Heart left ventricle (tissue), 16 donors: ENCODE measurements at regions of chr6 and their contacts with region 1.

Region 1: DNA sequence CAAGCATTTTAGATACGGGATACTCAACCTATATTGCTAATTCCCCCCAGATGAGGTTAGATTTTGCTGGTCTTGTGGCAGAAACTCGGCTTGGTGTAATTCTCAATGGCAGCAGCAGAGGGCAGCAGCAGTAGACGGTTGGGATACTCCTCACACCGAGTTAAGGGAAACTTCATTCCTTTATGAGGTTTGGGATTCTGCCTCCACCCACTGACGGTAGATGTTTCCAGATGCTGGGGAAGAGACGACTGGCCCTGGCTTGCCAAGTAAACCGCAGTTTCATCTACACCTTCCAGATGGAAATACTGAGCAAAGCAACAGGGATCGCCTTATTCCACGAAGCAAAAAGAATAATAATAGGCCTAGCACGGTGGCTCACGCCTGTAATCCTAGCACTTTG is 8.2 kb upstream of the TBC1D7 start:
- DNase-seq: peak; percentile 65 to 87 (median 74)
- ATAC-seq: peak; percentile 44 to 80 (median 75)
- H3K4me3 ChIP-seq: no peak overlapping the region
- H3K27ac ChIP-seq: peak overlapping the region in 1 of 12 donors; percentile 33
- H3K4me1 ChIP-seq: peaks cover 0 to 18% (median under 1%) of the 10 kb centered on the region in 12 donors
- H3K27me3 ChIP-seq: no peaks in the 10 kb centered on the region
- CTCF ChIP-seq: peak; percentile 78 to 96 (median 90)
- POLR2A ChIP-seq: no peak

Region 2: GRCh38 chr6:13355043-13355951 is 18.7 kb after region 1 on chr6:
- intact Hi-C with region 1: no loop called
- DNase-seq: no peak
- ATAC-seq: peak in 3 of 4 donors; percentile 39 to 68 (median 39)
- H3K4me3 ChIP-seq: peak overlapping the region in 1 of 12 donors; percentile 2
- H3K27ac ChIP-seq: peak overlapping the region; percentile 1 to 77 (median 42)
- H3K4me1 ChIP-seq: peaks cover 11 to 57% (median 37%) of the 10 kb centered on the region in 12 donors
- H3K27me3 ChIP-seq: no peaks in the 10 kb centered on the region
- CTCF ChIP-seq: no peak
- POLR2A ChIP-seq: no peak

Region 3: DNA sequence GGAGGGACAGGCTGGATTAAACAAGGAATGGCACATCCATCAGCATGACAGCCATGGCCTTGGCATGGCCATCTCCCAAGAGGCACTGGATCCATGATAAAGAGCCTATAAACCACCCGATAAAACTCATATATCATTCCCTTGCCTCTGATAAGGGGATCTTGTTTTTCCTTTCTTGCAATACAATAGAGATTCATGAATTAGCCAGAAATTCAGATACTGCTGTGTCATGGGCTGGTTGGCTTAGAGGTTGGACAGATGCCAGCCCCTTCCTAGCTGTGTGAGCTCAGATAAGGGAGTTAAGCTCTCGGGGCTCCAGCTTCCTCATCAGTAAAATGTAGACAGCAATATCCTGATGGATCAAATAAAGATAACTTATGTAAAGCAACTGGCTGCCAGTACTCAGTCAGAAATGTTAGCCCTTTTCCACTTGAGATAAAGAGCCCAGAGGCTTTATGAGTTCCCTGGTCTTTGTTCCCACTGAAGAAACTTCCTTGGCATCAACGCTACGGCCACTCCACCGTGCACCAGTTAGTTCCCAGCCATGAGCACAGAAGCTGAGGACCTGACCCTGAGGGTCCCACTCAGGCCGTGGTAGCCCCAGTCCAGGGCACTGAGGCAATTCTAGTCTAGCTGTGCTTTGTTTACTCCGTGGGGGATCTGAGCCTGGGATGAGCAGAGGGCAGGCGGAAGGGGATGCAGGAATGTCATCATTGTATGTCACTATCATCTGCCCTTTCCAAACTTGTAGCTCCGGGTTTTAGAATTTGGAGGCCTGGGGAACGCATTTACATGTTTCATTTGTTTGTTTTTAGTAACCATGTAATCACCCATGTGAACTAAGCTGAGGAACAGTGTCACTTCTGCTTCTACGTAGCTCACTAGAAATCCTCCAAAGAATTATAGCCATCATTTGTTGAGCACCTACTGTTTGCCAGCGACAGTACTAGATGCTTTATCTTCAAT is 59.0 kb after region 1 on chr6:
- intact Hi-C with region 1: loop called in 2 of 10 experiments (anchors 5 kb)
- DNase-seq: peak; percentile 76 to 83 (median 78)
- ATAC-seq: peak; percentile 33 to 82 (median 76)
- H3K4me3 ChIP-seq: no peak overlapping the region
- H3K27ac ChIP-seq: peak overlapping the region in 11 of 12 donors; percentile 24 to 84 (median 70)
- H3K4me1 ChIP-seq: peaks cover 7 to 60% (median 46%) of the 10 kb centered on the region in 12 donors
- H3K27me3 ChIP-seq: no peaks in the 10 kb centered on the region
- CTCF ChIP-seq: no peak
- POLR2A ChIP-seq: no peak

Region 4: DNA sequence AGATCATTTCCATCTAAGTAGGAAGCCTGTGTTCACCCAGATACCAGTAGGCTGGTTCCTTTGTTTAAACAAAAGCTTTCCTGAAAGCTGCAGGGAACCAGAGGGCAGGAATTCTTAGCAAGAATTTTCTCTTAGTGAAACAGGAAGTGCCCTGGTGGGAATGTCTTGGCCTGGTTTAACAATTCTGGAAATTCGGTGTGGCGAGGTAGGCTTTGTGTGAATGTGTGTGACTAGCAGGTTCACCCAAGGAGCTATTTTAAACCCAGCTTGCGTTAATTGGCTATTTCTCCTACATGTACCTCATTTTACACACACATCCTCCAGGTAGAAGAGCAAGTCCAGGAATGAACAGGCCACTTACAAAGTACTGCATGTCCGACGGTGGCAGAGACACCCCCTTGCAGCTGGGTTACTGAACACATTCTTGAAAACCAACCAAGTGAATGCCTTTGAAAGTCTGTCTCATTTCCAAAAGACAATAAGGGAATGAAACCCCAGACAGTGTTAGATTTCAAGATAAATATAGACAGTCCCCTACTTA is 86.2 kb after region 1 on chr6:
- intact Hi-C with region 1: loop called in 1 of 10 experiments (anchors 5 kb)
- DNase-seq: peak in 1 of 5 donors; percentile 39
- ATAC-seq: peak in 3 of 4 donors; percentile 32 to 46 (median 32)
- H3K4me3 ChIP-seq: no peak overlapping the region
- H3K27ac ChIP-seq: peak overlapping the region; percentile 1 to 88 (median 72)
- H3K4me1 ChIP-seq: peaks cover 33 to 100% (median 92%) of the 10 kb centered on the region in 12 donors
- H3K27me3 ChIP-seq: no peaks in the 10 kb centered on the region
- CTCF ChIP-seq: no peak
- POLR2A ChIP-seq: no peak

Region 5: GRCh38 chr6:13487122-13488014 is 150.8 kb after region 1 on chr6 and contains the start of gene GFOD1:
- intact Hi-C with region 1: loop called in 5 of 10 experiments (anchors 1 to 5 kb)
- DNase-seq: peak; percentile 91 to 95 (median 92)
- ATAC-seq: peak; percentile 81 to 91 (median 86)
- H3K4me3 ChIP-seq: peak within 1 kb of the TSS; percentile 68 to 97 (median 90)
- H3K27ac ChIP-seq: peak within 1 kb of the TSS; percentile 86 to 98 (median 95)
- H3K4me1 ChIP-seq: peaks cover 0 to 47% (median 31%) of the 10 kb centered on the region in 12 donors
- H3K27me3 ChIP-seq: no peaks in the 10 kb centered on the region
- CTCF ChIP-seq: peak in 4 of 12 donors; percentile 21 to 36 (median 28)
- POLR2A ChIP-seq: peak; percentile 88 to 97
- total RNA-seq, gene GFOD1: 25.0 to 65.8 (median 41.9) TPM

Region 6: GRCh38 chr6:13574149-13574570 is 237.6 kb after region 1 on chr6:
- intact Hi-C with region 1: loop called in 6 of 10 experiments (anchors 2 to 5 kb)
- DNase-seq: peak; percentile 94 to 96 (median 95)
- ATAC-seq: peak; percentile 96 to 97 (median 96)
- H3K4me3 ChIP-seq: peak overlapping the region; percentile 30 to 93 (median 85)
- H3K27ac ChIP-seq: peak overlapping the region; percentile 93 to 100 (median 98)
- H3K4me1 ChIP-seq: peaks cover 0 to 31% (median 15%) of the 10 kb centered on the region in 12 donors
- H3K27me3 ChIP-seq: no peaks in the 10 kb centered on the region
- CTCF ChIP-seq: peak; percentile 31 to 73 (median 50)
- POLR2A ChIP-seq: no peak

Region 7: GRCh38 chr6:13814176-13814937 is 477.8 kb after region 1 on chr6 and contains the start of gene MCUR1:
- intact Hi-C with region 1: no loop called
- DNase-seq: peak; percentile 88 to 94 (median 92)
- ATAC-seq: peak; percentile 89 to 96 (median 94)
- H3K4me3 ChIP-seq: peak within 1 kb of the TSS; percentile 67 to 97 (median 88)
- H3K27ac ChIP-seq: peak within 1 kb of the TSS; percentile 81 to 99 (median 97)
- H3K4me1 ChIP-seq: peaks cover 4 to 42% (median 34%) of the 10 kb centered on the region in 12 donors
- H3K27me3 ChIP-seq: no peaks in the 10 kb centered on the region
- CTCF ChIP-seq: peak in 6 of 12 donors; percentile 7 to 51 (median 38)
- POLR2A ChIP-seq: peak in 1 of 2 donors; percentile 72
- total RNA-seq, gene MCUR1: 16.3 to 32.1 (median 28.0) TPM

Region 8: DNA sequence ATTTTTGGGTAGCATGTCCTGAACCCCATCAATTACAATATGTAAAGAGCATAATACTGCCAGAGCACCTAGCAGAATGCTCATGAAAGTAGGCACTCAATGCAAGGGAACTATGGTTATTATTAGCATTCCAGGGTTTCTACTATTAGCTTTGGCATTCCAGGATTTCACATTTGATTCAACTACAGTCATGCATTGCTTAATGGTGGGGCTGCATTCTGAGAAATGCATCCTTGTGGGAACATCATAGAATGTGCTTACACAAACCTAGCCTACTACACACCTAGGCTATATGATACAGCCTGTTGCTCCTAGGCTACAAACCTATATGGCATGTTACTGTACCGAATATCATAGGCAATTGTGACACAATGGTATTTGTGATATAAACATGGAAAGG is 1028.8 kb after region 1 on chr6:
- intact Hi-C with region 1: no loop called
- DNase-seq: no peak
- ATAC-seq: no peak
- H3K4me3 ChIP-seq: no peak overlapping the region
- H3K27ac ChIP-seq: no peak overlapping the region
- H3K4me1 ChIP-seq: peaks cover 0 to 40% (median 17%) of the 10 kb centered on the region in 12 donors
- H3K27me3 ChIP-seq: no peaks in the 10 kb centered on the region
- CTCF ChIP-seq: no peak
- POLR2A ChIP-seq: no peak